ENCODE measurements at regions of chr20 and their contacts with region 1.

Region 1: GRCh38 chr20:56358596-56359211 is at the start of gene FAM210B:
- DNase-seq: peak; percentile 72 to 84
- H3K4me3 ChIP-seq: peak within 1 kb of the TSS; percentile 65 to 94 (median 73)
- H3K27ac ChIP-seq: no peak within 1 kb of the TSS
- H3K4me1 ChIP-seq: peaks cover 4 to 11% (median 6%) of the 10 kb centered on the region in 4 experiments
- H3K27me3 ChIP-seq: peaks cover 0 to 11% (median 8%) of the 10 kb centered on the region in 4 experiments; a peak in 4 of 7 replicates
- CTCF ChIP-seq: no peak
- EP300 ChIP-seq: no peak
- POLR2A ChIP-seq: no peak
- RAD21 ChIP-seq: no peak
- total RNA-seq, gene FAM210B: 15.0 and 15.1 TPM in 2 replicates

Region 2: GRCh38 chr20:56202493-56203077 is 156.1 kb before region 1 on chr20:
- CTCF ChIA-PET with region 1: no interaction called
- POLR2A ChIA-PET with region 1: no interaction called
- DNase-seq: no peak
- H3K4me3 ChIP-seq: no peak overlapping the region
- H3K27ac ChIP-seq: no peak overlapping the region
- H3K4me1 ChIP-seq: no peaks in the 10 kb centered on the region; a peak in 1 of 7 replicates
- H3K27me3 ChIP-seq: no peaks in the 10 kb centered on the region
- CTCF ChIP-seq: peak in 2 of 3 experiments; percentile 28 to 36; a peak in 2 of 4 replicates
- EP300 ChIP-seq: no peak
- POLR2A ChIP-seq: no peak
- RAD21 ChIP-seq: peak; percentile 45 to 57

Region 3: GRCh38 chr20:56392282-56393137 is 33.8 kb after region 1 on chr20 and contains the start of gene CSTF1:
- CTCF ChIA-PET with region 1: interaction called, 3 read pairs
- POLR2A ChIA-PET with region 1: interaction called, 10 read pairs
- DNase-seq: peak; percentile 98 to 99
- H3K4me3 ChIP-seq: peak within 1 kb of the TSS; percentile 88 to 99 (median 98)
- H3K27ac ChIP-seq: peak within 1 kb of the TSS; percentile 92
- H3K4me1 ChIP-seq: peaks cover 3 to 7% (median 4%) of the 10 kb centered on the region in 4 experiments; a peak in 5 of 7 replicates
- H3K27me3 ChIP-seq: no peaks in the 10 kb centered on the region
- CTCF ChIP-seq: no peak
- EP300 ChIP-seq: no peak; a peak in 1 of 3 replicates
- POLR2A ChIP-seq: peak in 1 of 2 experiments; percentile 28; a peak in 1 of 3 replicates
- RAD21 ChIP-seq: no peak
- total RNA-seq, gene CSTF1: 56.4 and 59.4 TPM in 2 replicates